ENCODE measurements at regions of chr11 and their contacts with region 1.

Region 1: GRCh38 chr11:11787305-11788062 is 54.3 kb upstream of the USP47 start:
- DNase-seq: no peak
- ATAC-seq: peak; percentile 90

Region 2: DNA sequence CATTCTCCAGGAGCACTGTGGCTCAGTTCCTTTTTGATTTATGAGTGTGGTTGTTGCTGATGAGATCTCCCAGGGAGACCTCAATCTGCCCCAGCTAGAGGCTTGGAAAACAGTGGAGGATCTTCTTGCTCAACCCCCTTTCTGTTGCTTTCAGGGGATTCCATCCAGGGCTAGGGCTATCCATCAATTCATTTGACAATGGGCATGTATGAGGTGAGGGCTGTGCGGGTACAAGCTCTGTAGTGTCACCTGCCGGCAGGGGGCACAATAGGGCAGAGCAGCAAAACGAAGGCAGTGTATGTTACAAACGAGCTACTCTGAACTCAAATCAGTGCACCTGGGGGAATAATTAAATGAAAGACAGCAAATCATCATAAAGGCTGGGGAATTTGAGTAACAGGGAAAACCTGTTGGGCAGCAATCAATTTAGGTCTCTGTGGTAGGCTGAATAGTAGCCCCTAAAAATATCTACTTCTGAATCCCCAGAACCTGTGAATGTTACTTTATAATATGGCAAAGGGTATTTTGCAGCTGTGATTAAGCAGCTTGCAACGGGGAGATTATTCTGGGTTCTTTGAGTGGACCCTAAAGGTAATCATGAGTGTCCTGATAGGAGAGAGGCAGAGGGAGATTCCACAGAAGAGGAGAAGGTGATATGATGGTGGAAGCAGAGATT is 759.3 kb before region 1 on chr11:
- intact Hi-C with region 1: loop called (anchors 2 kb)
- DNase-seq: peak; percentile 73
- ATAC-seq: peak; percentile 68

Region 3: GRCh38 chr11:11157185-11157584 is 630.3 kb before region 1 on chr11:
- intact Hi-C with region 1: loop called (anchors 5 kb)
- DNase-seq: no peak
- ATAC-seq: no peak

Region 4: GRCh38 chr11:11538277-11538960 is 249.1 kb before region 1 on chr11:
- intact Hi-C with region 1: loop called (anchors 10 kb)
- DNase-seq: peak; percentile 77
- ATAC-seq: peak; percentile 86